Naive thymus-derived CD4-positive, alpha-beta T cell (primary cell): ENCODE measurements at regions of chr12 and their contacts with region 1.

Region 1: DNA sequence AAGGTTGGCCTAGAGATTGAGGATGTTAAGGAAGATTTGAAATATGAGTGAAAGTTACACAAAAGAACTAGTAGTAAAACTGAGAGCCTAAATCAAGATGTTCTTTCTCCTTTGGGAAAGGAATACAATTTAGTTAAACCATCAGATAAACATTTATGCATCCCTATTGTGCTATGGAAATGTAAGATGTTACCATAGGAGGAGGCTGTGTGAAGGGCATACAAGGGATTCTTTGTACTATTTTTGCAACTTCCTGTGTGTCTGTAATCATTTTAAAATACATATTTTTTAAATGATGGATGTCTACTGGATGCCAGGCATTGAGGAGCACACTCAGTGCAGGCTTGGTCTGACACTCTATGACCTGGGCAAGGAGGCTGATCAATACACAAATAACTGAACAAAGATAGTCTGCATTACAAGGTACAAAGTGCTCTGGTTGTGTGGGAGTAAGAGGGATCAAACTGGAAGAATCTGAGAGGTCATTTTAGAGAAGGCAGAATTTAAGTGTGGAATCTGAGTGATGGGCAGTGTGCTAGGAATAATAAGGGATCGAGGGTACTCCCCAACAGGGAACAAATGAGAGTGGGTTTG is 5.8 kb upstream of the CHPT1 start:
- DNase-seq: no peak
- ATAC-seq: no peak
- H3K4me3 ChIP-seq: no peak overlapping the region
- H3K4me3 Mint-ChIP-seq: peak overlapping the region in 1 of 10 donors; percentile 43
- H3K27ac ChIP-seq: no peak overlapping the region
- H3K27ac Mint-ChIP-seq: no peak overlapping the region
- H3K4me1 ChIP-seq: peaks cover 0 to 5% of the 10 kb centered on the region in 2 donors
- H3K4me1 Mint-ChIP-seq: peaks cover 3 to 17% (median 10%) of the 10 kb centered on the region in 7 donors
- H3K27me3 ChIP-seq: no peaks in the 10 kb centered on the region
- H3K27me3 Mint-ChIP-seq: peaks cover 0 to 7% (median 0%) of the 10 kb centered on the region in 5 donors

Region 2: GRCh38 chr12:101323255-101323654 is 368.3 kb before region 1 on chr12:
- CTCF ChIA-PET with region 1: no interaction called
- POLR2A ChIA-PET with region 1: no interaction called
- intact Hi-C with region 1: no loop called
- DNase-seq: no peak
- ATAC-seq: no peak
- H3K4me3 ChIP-seq: no peak overlapping the region
- H3K4me3 Mint-ChIP-seq: no peak overlapping the region
- H3K27ac ChIP-seq: no peak overlapping the region
- H3K27ac Mint-ChIP-seq: no peak overlapping the region
- H3K4me1 ChIP-seq: no peaks in the 10 kb centered on the region
- H3K4me1 Mint-ChIP-seq: peaks cover 0 to 2% (median 0%) of the 10 kb centered on the region in 7 donors
- H3K27me3 ChIP-seq: no peaks in the 10 kb centered on the region
- H3K27me3 Mint-ChIP-seq: no peaks in the 10 kb centered on the region

Region 3: GRCh38 chr12:101707131-101707782 is 15.7 kb after region 1 on chr12:
- CTCF ChIA-PET with region 1: no interaction called
- POLR2A ChIA-PET with region 1: no interaction called
- intact Hi-C with region 1: loop called in 1 of 2 experiments (anchors 2 kb)
- DNase-seq: no peak
- ATAC-seq: no peak
- H3K4me3 ChIP-seq: no peak overlapping the region
- H3K4me3 Mint-ChIP-seq: no peak overlapping the region
- H3K27ac ChIP-seq: no peak overlapping the region
- H3K27ac Mint-ChIP-seq: peak overlapping the region in 2 of 9 donors; percentile 21 to 25
- H3K4me1 ChIP-seq: peaks cover 0 to 4% of the 10 kb centered on the region in 2 donors
- H3K4me1 Mint-ChIP-seq: peaks cover 5 to 40% (median 13%) of the 10 kb centered on the region in 7 donors
- H3K27me3 ChIP-seq: no peaks in the 10 kb centered on the region
- H3K27me3 Mint-ChIP-seq: no peaks in the 10 kb centered on the region

Region 4: DNA sequence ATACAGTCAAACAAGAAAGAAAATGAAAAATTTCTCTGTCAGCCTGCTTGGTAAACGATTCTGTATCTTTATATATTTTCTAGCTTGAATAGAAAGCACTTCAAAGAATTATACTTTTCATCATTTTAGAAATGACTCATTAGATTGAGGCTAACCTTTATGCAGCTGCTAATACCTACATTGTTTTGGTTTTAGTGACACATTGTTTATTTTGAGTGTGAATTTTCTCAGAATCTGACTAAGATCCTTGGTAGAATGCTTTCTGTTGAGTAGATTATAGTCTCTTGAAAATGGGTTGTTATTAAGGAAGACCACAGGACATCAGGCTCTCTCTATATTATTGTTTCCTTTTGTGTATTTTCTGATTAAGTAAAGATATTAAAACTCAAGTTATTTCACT is 506.2 kb after region 1 on chr12 and contains the start of gene PMCH:
- CTCF ChIA-PET with region 1: no interaction called
- POLR2A ChIA-PET with region 1: no interaction called
- intact Hi-C with region 1: no loop called
- DNase-seq: no peak
- ATAC-seq: no peak
- H3K4me3 ChIP-seq: no peak within 1 kb of the TSS
- H3K4me3 Mint-ChIP-seq: peak within 1 kb of the TSS in 1 of 10 donors; percentile 24
- H3K27ac ChIP-seq: no peak within 1 kb of the TSS
- H3K27ac Mint-ChIP-seq: peak within 1 kb of the TSS in 1 of 9 donors; percentile 60
- H3K4me1 ChIP-seq: no peaks in the 10 kb centered on the region
- H3K4me1 Mint-ChIP-seq: peaks cover 0 to 22% (median 0%) of the 10 kb centered on the region in 7 donors
- H3K27me3 ChIP-seq: no peaks in the 10 kb centered on the region
- H3K27me3 Mint-ChIP-seq: no peaks in the 10 kb centered on the region
- total RNA-seq, gene PMCH: 2.9 TPM in 1 of 5 experiments, not detected in the others